CD8-positive, alpha-beta T cell (primary cell): ENCODE measurements at regions of chr7 and their contacts with region 1.

Region 1: GRCh38 chr7:151936207-151936606 is 20.0 kb upstream of the GALNTL5 start:
- DNase-seq: peak in 2 of 9 experiments; percentile 61 to 81
- ATAC-seq: peak; percentile 91
- H3K4me3 ChIP-seq: peak overlapping the region; percentile 4 to 24
- H3K4me3 Mint-ChIP-seq: peak overlapping the region; percentile 80
- H3K27ac ChIP-seq: peak overlapping the region; percentile 54 to 77
- H3K27ac Mint-ChIP-seq: peak overlapping the region; percentile 96
- H3K4me1 ChIP-seq: peaks cover 15% of the 10 kb centered on the region
- H3K4me1 Mint-ChIP-seq: peaks cover 17% of the 10 kb centered on the region
- H3K27me3 ChIP-seq: peaks cover 0 to 3% of the 10 kb centered on the region in 2 experiments
- H3K27me3 Mint-ChIP-seq: no peaks in the 10 kb centered on the region
- CTCF ChIP-seq: no peak

Region 2: GRCh38 chr7:151863386-151864079 is 72.7 kb before region 1 on chr7:
- CTCF ChIA-PET with region 1: interaction called, 3 read pairs
- POLR2A ChIA-PET with region 1: no interaction called
- intact Hi-C with region 1: loop called in 1 of 2 experiments (anchors 5 kb)
- DNase-seq: peak in 2 of 9 experiments; percentile 22 to 38
- ATAC-seq: no peak
- H3K4me3 ChIP-seq: no peak overlapping the region
- H3K4me3 Mint-ChIP-seq: no peak overlapping the region
- H3K27ac ChIP-seq: no peak overlapping the region
- H3K27ac Mint-ChIP-seq: no peak overlapping the region
- H3K4me1 ChIP-seq: no peaks in the 10 kb centered on the region
- H3K4me1 Mint-ChIP-seq: peaks cover 24% of the 10 kb centered on the region
- H3K27me3 ChIP-seq: no peaks in the 10 kb centered on the region
- H3K27me3 Mint-ChIP-seq: no peaks in the 10 kb centered on the region
- CTCF ChIP-seq: no peak

Region 3: GRCh38 chr7:152103691-152104090 is 167.5 kb after region 1 on chr7:
- CTCF ChIA-PET with region 1: no interaction called
- POLR2A ChIA-PET with region 1: no interaction called
- intact Hi-C with region 1: no loop called
- DNase-seq: no peak
- ATAC-seq: no peak
- H3K4me3 ChIP-seq: no peak overlapping the region
- H3K4me3 Mint-ChIP-seq: no peak overlapping the region
- H3K27ac ChIP-seq: no peak overlapping the region
- H3K27ac Mint-ChIP-seq: peak overlapping the region; percentile 28
- H3K4me1 ChIP-seq: no peaks in the 10 kb centered on the region
- H3K4me1 Mint-ChIP-seq: no peaks in the 10 kb centered on the region
- H3K27me3 ChIP-seq: no peaks in the 10 kb centered on the region
- H3K27me3 Mint-ChIP-seq: no peaks in the 10 kb centered on the region
- CTCF ChIP-seq: no peak